ENCODE measurements at regions of chr15 and their contacts with region 1.

Region 1: GRCh38 chr15:45429974-45430792 is 51.8 kb upstream of the GATM start:
- DNase-seq: peak; percentile 92
- ATAC-seq: peak; percentile 97
- H3K4me3 Mint-ChIP-seq: peak overlapping the region; percentile 56
- H3K27ac Mint-ChIP-seq: no peak overlapping the region
- H3K4me1 Mint-ChIP-seq: peaks cover 2% of the 10 kb centered on the region
- H3K27me3 Mint-ChIP-seq: peaks cover 7% of the 10 kb centered on the region

Region 2: GRCh38 chr15:45414215-45414885 is 15.8 kb before region 1 on chr15:
- CTCF ChIA-PET with region 1: interaction called, 13 read pairs
- POLR2A ChIA-PET with region 1: no interaction called
- intact Hi-C with region 1: no loop called
- DNase-seq: no peak
- ATAC-seq: no peak
- H3K4me3 Mint-ChIP-seq: no peak overlapping the region
- H3K27ac Mint-ChIP-seq: peak overlapping the region; percentile 7
- H3K4me1 Mint-ChIP-seq: peaks cover 20% of the 10 kb centered on the region
- H3K27me3 Mint-ChIP-seq: no peaks in the 10 kb centered on the region

Region 3: GRCh38 chr15:45628136-45628535 is 198.0 kb after region 1 on chr15:
- CTCF ChIA-PET with region 1: no interaction called
- POLR2A ChIA-PET with region 1: no interaction called
- intact Hi-C with region 1: no loop called
- DNase-seq: no peak
- ATAC-seq: no peak
- H3K4me3 Mint-ChIP-seq: no peak overlapping the region
- H3K27ac Mint-ChIP-seq: no peak overlapping the region
- H3K4me1 Mint-ChIP-seq: peaks cover 5% of the 10 kb centered on the region
- H3K27me3 Mint-ChIP-seq: no peaks in the 10 kb centered on the region

Measured in activated CD4-positive, alpha-beta T cell treated with anti-CD3 and anti-CD28 coated beads for 36 hours (primary cell).